HEK293 (cell line): ENCODE measurements at regions of chr13 and their contacts with region 1.

Region 1: DNA sequence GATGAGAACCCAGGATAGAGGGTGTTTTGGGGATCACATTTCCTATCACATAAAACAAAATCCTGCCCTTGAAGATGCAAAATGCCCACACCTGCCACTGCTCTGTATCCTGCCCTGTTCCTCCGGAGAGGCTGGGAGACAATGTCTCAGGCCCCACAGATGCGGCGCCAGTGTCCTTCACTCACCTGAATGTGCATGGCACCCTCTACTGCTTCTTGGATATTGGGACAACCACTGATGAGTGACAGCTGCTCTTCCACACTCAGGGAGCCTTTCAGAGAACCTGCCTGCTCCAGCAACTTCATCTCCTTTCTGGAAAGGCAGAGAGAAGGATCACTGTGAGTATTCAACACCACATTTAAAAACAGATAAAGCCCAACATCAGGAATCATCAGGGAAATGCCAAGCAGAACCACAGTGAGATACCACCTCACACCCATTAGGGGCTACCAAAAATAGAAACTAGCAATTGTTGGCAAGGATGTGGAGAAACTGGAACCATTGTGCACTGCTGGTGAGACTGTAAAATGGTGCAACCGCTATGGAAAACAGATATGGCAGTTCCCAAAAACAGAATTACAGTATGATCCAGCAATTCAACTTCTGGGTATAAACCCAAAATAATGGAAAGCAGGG is 36.4 kb downstream of the CRYL1 start:
- H3K4me3 ChIP-seq: no peak overlapping the region
- H3K27ac ChIP-seq: no peak overlapping the region
- H3K4me1 ChIP-seq: no peaks in the 10 kb centered on the region
- CTCF ChIP-seq: no peak

Region 2: GRCh38 chr13:20182231-20182846 is 307.0 kb before region 1 on chr13:
- CTCF ChIA-PET with region 1: interaction called, 16 read pairs
- POLR2A ChIA-PET with region 1: no interaction called
- H3K4me3 ChIP-seq: no peak overlapping the region
- H3K27ac ChIP-seq: no peak overlapping the region
- H3K4me1 ChIP-seq: no peaks in the 10 kb centered on the region
- CTCF ChIP-seq: no peak; the same call in 1 of the 2 replicates